T-cell (primary cell): ENCODE measurements at regions of chr1 and their contacts with region 1.

Region 1: DNA sequence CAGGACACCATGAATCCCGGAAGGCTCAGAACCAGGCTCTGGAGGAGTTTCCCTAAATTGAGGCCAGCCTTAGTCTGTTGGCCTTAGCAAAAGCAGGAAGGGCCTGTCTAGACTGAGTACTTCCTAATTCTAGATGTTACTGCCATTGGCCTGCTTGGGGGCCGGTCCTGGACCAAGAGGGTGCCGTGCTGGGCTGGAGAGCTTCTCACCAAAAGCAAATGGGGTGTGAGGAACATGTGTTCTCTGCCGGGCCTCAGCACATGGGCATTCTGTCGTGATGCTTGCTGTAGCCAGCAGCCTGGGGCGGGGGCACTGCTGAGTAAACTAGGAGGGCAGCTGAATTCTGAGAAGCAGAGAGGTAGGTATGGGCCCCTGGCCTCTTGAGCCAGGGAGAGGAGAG is 35.7 kb upstream of the MAN1C1 start:
- DNase-seq: no peak
- ATAC-seq: no peak
- H3K4me3 ChIP-seq: no peak overlapping the region
- H3K4me3 Mint-ChIP-seq: no peak overlapping the region
- H3K27ac ChIP-seq: no peak overlapping the region
- H3K27ac Mint-ChIP-seq: no peak overlapping the region
- H3K4me1 ChIP-seq: peaks cover 0 to 9% of the 10 kb centered on the region in 2 experiments
- H3K4me1 Mint-ChIP-seq: peaks cover 7 to 15% (median 10%) of the 10 kb centered on the region in 3 donors
- H3K27me3 ChIP-seq: peaks cover 0 to 9% of the 10 kb centered on the region in 2 experiments
- H3K27me3 Mint-ChIP-seq: no peaks in the 10 kb centered on the region

Region 2: GRCh38 chr1:25568090-25568833 is 12.7 kb before region 1 on chr1:
- CTCF ChIA-PET with region 1: no interaction called
- POLR2A ChIA-PET with region 1: no interaction called
- DNase-seq: no peak
- ATAC-seq: no peak
- H3K4me3 ChIP-seq: no peak overlapping the region
- H3K4me3 Mint-ChIP-seq: peak overlapping the region; percentile 1 to 99 (median 18)
- H3K27ac ChIP-seq: no peak overlapping the region
- H3K27ac Mint-ChIP-seq: peak overlapping the region; percentile 79 to 97
- H3K4me1 ChIP-seq: peaks cover 25 to 91% of the 10 kb centered on the region in 2 experiments
- H3K4me1 Mint-ChIP-seq: peaks cover 74 to 91% (median 81%) of the 10 kb centered on the region in 3 donors
- H3K27me3 ChIP-seq: peaks cover 0 to 3% of the 10 kb centered on the region in 2 experiments
- H3K27me3 Mint-ChIP-seq: no peaks in the 10 kb centered on the region

Region 3: DNA sequence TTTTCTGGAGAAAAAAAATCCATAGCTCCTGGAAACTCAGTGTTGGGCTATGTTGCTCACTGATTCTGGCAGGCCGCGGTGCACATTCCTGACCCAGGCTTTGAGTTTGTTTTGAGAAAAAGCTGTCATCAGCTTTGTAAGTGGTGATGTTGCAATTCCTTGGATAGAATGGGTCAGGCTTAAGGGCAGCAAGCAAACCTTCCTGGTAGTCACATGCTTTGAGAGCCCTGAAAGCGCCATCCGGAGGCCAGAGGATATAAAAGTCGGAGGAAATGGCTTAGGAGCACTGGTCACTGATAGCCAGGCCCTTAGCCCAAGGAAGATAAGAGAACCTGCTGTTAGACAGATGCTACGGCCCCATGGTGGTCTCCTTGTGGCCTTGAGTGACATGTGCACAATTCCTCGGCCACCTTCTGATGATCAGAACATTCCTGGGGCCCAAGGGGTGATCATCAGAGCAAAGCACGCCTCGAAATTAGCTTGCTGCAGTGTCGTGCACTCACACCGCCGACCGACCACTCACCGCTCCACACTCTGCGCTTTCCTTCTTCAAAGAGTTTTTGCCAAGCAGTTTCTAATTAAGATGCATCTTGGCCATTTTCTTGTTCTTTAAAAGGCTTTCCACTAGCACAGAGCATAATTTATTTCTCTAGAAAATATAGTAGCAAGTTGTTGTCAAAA is 114.3 kb after region 1 on chr1:
- CTCF ChIA-PET with region 1: no interaction called
- POLR2A ChIA-PET with region 1: no interaction called
- DNase-seq: no peak
- ATAC-seq: no peak
- H3K4me3 ChIP-seq: no peak overlapping the region
- H3K4me3 Mint-ChIP-seq: peak overlapping the region in 1 of 3 donors; percentile 6
- H3K27ac ChIP-seq: no peak overlapping the region
- H3K27ac Mint-ChIP-seq: peak overlapping the region; percentile 65 to 83
- H3K4me1 ChIP-seq: peaks cover 29 to 50% of the 10 kb centered on the region in 2 experiments
- H3K4me1 Mint-ChIP-seq: peaks cover 57 to 66% (median 62%) of the 10 kb centered on the region in 3 donors
- H3K27me3 ChIP-seq: no peaks in the 10 kb centered on the region
- H3K27me3 Mint-ChIP-seq: no peaks in the 10 kb centered on the region

Region 4: GRCh38 chr1:25811384-25812082 is 230.6 kb after region 1 on chr1:
- CTCF ChIA-PET with region 1: no interaction called
- POLR2A ChIA-PET with region 1: interaction called in 1 of 2 experiments, 11 read pairs
- DNase-seq: no peak
- ATAC-seq: no peak
- H3K4me3 ChIP-seq: no peak overlapping the region
- H3K4me3 Mint-ChIP-seq: no peak overlapping the region
- H3K27ac ChIP-seq: no peak overlapping the region
- H3K27ac Mint-ChIP-seq: no peak overlapping the region
- H3K4me1 ChIP-seq: peaks cover 0 to 12% of the 10 kb centered on the region in 2 experiments
- H3K4me1 Mint-ChIP-seq: peaks cover 8 to 10% (median 9%) of the 10 kb centered on the region in 3 donors
- H3K27me3 ChIP-seq: no peaks in the 10 kb centered on the region
- H3K27me3 Mint-ChIP-seq: no peaks in the 10 kb centered on the region

Region 5: DNA sequence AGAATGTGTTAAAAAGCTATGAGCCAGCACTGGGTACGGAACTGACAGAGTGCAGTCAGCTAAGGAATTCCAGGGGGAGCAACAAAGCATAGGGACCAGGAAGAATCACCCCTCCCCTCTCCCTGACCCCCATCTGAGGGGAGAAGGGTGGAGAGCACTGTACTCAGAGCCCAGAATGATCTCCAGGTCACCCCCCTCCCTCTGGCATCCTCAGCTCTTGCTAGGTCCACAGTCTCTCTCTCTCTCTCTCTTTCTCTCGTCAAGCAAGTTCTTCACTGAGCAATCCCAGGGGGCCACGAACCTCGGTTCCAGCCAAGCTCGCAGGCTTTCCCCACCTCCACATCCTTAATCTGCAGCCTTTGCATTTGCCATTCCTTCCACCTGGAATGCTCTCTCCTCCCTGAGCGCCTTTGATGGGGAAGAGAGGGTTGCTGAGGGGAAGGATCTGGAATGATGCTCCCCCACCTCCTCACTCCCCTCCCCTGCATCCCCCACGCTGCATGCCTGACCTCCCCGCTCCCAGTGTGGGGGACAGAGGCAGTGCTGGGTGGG is 1915.8 kb after region 1 on chr1:
- CTCF ChIA-PET with region 1: no interaction called
- POLR2A ChIA-PET with region 1: interaction called in 1 of 2 experiments, 10 read pairs
- DNase-seq: no peak
- ATAC-seq: no peak
- H3K4me3 ChIP-seq: no peak overlapping the region
- H3K4me3 Mint-ChIP-seq: no peak overlapping the region
- H3K27ac ChIP-seq: no peak overlapping the region
- H3K27ac Mint-ChIP-seq: no peak overlapping the region
- H3K4me1 ChIP-seq: no peaks in the 10 kb centered on the region
- H3K4me1 Mint-ChIP-seq: peaks cover 0 to 5% (median 3%) of the 10 kb centered on the region in 3 donors
- H3K27me3 ChIP-seq: peaks cover 0 to 10% of the 10 kb centered on the region in 2 experiments
- H3K27me3 Mint-ChIP-seq: peaks cover 0 to 3% of the 10 kb centered on the region in 2 donors